CD8-positive, alpha-beta T cell (primary cell): ENCODE measurements at regions of chr4 and their contacts with region 1.

Region 1: GRCh38 chr4:70993181-70994068 is at the start of gene DCK:
- DNase-seq: peak; percentile 65 to 93 (median 82)
- ATAC-seq: peak; percentile 79
- H3K4me3 ChIP-seq: peak within 1 kb of the TSS; percentile 81 to 99
- H3K4me3 Mint-ChIP-seq: peak within 1 kb of the TSS; percentile 95
- H3K27ac ChIP-seq: peak within 1 kb of the TSS; percentile 71 to 88
- H3K27ac Mint-ChIP-seq: peak within 1 kb of the TSS; percentile 94
- H3K4me1 ChIP-seq: peaks cover 29% of the 10 kb centered on the region
- H3K4me1 Mint-ChIP-seq: peaks cover 54% of the 10 kb centered on the region
- H3K27me3 ChIP-seq: no peaks in the 10 kb centered on the region
- H3K27me3 Mint-ChIP-seq: no peaks in the 10 kb centered on the region
- CTCF ChIP-seq: no peak
- total RNA-seq, gene DCK: 18.7 TPM

Region 2: GRCh38 chr4:70559211-70559830 is 434.1 kb before region 1 on chr4:
- CTCF ChIA-PET with region 1: no interaction called
- POLR2A ChIA-PET with region 1: no interaction called
- intact Hi-C with region 1: no loop called
- DNase-seq: peak; percentile 3 to 54 (median 37)
- ATAC-seq: no peak
- H3K4me3 ChIP-seq: no peak overlapping the region
- H3K4me3 Mint-ChIP-seq: no peak overlapping the region
- H3K27ac ChIP-seq: no peak overlapping the region
- H3K27ac Mint-ChIP-seq: no peak overlapping the region
- H3K4me1 ChIP-seq: no peaks in the 10 kb centered on the region
- H3K4me1 Mint-ChIP-seq: peaks cover 10% of the 10 kb centered on the region
- H3K27me3 ChIP-seq: no peaks in the 10 kb centered on the region
- H3K27me3 Mint-ChIP-seq: no peaks in the 10 kb centered on the region
- CTCF ChIP-seq: peak; percentile 66

Region 3: DNA sequence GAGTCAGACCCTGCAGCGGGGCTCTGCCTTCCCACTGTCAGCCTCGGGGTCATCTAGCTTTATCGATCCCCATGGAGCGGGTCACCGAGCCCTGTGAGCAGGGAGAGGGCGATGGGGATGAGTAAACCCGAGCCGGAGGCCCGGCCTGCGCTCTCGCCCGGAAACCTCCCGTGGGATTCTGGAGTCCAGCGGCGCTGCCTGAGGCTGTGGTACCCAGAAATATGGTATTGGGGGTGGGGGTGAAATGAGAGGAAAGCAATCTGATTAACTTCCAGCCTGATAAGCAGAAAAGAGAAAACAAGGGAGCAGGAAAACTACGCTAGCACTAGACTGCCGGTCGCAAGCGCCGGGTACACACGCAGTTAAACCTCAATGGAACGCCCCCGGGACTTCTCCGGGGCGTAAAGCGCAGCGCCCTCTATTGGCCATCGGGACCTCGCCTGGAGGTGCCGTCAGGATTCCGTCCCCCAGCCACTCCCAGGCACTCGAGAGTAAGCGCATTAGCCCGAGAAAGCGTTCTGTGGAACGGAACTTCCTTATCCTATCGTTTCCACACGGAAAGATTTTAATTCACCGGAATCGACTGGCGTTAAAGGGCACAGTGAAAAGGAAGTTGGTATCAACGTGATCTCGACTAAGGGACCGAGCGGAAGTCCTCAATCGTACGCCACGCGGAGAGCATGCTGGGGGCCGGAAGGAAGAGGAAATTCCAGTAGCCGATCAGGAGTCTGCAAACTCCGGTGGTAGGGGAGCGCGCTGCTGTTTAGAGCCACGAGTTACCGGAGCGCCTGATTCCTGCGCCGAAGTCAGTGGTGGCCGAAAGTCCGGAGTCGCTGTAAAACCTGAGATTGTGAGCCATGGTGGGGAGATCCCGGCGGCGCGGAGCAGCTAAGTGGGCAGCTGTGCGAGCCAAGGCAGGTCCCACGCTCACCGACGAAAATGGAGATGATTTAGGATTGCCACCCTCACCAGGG is 305.3 kb before region 1 on chr4 and contains the start of gene UTP3:
- CTCF ChIA-PET with region 1: no interaction called
- POLR2A ChIA-PET with region 1: no interaction called
- intact Hi-C with region 1: loop called (anchors 5 kb)
- DNase-seq: peak; percentile 84 to 98 (median 93)
- ATAC-seq: peak; percentile 89
- H3K4me3 ChIP-seq: peak within 1 kb of the TSS; percentile 78 to 84
- H3K4me3 Mint-ChIP-seq: peak within 1 kb of the TSS; percentile 98
- H3K27ac ChIP-seq: peak within 1 kb of the TSS; percentile 85 to 92
- H3K27ac Mint-ChIP-seq: peak within 1 kb of the TSS; percentile 99
- H3K4me1 ChIP-seq: peaks cover 21% of the 10 kb centered on the region
- H3K4me1 Mint-ChIP-seq: peaks cover 44% of the 10 kb centered on the region
- H3K27me3 ChIP-seq: no peaks in the 10 kb centered on the region
- H3K27me3 Mint-ChIP-seq: no peaks in the 10 kb centered on the region
- CTCF ChIP-seq: peak; percentile 96
- total RNA-seq, gene UTP3: 21.6 to 23.1 TPM

Region 4: DNA sequence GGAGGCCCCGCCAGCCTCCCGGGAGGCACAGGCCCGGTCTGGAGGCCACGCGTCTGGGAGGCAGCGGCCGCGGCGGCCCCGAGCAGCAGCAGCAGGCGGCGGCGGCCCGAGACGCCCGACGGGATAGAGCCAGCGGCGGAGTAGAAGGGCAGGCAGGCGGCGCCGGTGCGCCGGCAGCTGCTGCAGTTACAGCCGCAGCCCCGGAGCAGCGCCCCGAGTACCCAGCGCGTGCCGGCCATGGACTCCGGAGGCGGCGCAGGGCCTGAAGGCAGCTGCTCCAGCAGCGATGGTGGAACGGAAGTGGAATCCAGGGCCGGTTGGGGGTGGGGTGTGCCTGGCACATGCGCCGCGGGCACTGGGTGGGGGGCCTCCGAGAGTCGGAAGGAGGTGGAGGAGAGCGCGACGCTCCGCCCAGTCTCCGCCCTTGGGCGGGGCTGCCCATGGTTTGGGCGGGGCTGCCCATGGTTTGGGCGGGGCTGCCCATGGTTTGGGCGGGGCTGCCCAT is 153.8 kb before region 1 on chr4 and contains the start of gene GRSF1:
- CTCF ChIA-PET with region 1: no interaction called
- POLR2A ChIA-PET with region 1: interaction called, 3 read pairs
- intact Hi-C with region 1: loop called (anchors 1 to 2 kb)
- DNase-seq: peak; percentile 90 to 97 (median 95)
- ATAC-seq: peak; percentile 94
- H3K4me3 ChIP-seq: peak within 1 kb of the TSS; percentile 65 to 80
- H3K4me3 Mint-ChIP-seq: peak within 1 kb of the TSS; percentile 97
- H3K27ac ChIP-seq: peak within 1 kb of the TSS; percentile 80
- H3K27ac Mint-ChIP-seq: peak within 1 kb of the TSS; percentile 97
- H3K4me1 ChIP-seq: peaks cover 29% of the 10 kb centered on the region
- H3K4me1 Mint-ChIP-seq: peaks cover 31% of the 10 kb centered on the region
- H3K27me3 ChIP-seq: no peaks in the 10 kb centered on the region
- H3K27me3 Mint-ChIP-seq: no peaks in the 10 kb centered on the region
- CTCF ChIP-seq: no peak
- total RNA-seq, gene GRSF1: 32.1 to 35.7 TPM

Region 5: DNA sequence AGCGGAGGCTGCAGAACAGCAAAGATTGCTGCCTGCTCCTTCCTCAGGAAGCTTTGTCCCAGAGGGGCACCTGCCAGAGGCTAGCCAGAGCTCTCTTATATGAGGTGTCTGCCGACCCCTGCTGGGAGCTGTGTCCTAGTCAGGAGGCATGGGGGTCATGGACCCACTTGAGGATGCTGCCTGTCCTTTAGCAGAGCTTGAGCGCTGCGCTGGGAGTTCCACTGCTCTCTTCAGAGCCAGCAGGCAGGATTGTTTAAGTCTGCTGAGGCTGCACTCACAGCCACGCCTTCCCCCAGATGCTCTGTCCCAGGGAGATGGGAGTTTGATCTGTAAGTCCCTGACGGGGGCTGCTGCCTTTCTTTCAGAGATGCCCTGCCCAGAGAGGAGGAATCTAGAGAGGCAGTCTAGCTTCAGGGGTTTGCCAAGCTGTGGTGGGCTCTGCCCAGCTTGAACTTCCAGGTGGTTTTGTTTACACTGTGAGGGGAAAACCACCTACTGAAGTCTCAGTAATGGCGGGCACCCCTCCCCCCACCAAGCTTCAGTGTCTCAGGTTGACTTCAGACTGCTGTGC is 10.9 kb after region 1 on chr4:
- CTCF ChIA-PET with region 1: interaction called, 70 read pairs
- POLR2A ChIA-PET with region 1: interaction called, 24 read pairs
- intact Hi-C with region 1: loop called in 1 of 2 experiments (anchors 1 kb)
- DNase-seq: peak; percentile 30 to 90 (median 69)
- ATAC-seq: peak; percentile 86
- H3K4me3 ChIP-seq: peak overlapping the region; percentile 23 to 41
- H3K4me3 Mint-ChIP-seq: peak overlapping the region; percentile 71
- H3K27ac ChIP-seq: peak overlapping the region in 1 of 2 experiments; percentile 65
- H3K27ac Mint-ChIP-seq: peak overlapping the region; percentile 92
- H3K4me1 ChIP-seq: peaks cover 39% of the 10 kb centered on the region
- H3K4me1 Mint-ChIP-seq: peaks cover 88% of the 10 kb centered on the region
- H3K27me3 ChIP-seq: no peaks in the 10 kb centered on the region
- H3K27me3 Mint-ChIP-seq: no peaks in the 10 kb centered on the region
- CTCF ChIP-seq: no peak

Region 6: DNA sequence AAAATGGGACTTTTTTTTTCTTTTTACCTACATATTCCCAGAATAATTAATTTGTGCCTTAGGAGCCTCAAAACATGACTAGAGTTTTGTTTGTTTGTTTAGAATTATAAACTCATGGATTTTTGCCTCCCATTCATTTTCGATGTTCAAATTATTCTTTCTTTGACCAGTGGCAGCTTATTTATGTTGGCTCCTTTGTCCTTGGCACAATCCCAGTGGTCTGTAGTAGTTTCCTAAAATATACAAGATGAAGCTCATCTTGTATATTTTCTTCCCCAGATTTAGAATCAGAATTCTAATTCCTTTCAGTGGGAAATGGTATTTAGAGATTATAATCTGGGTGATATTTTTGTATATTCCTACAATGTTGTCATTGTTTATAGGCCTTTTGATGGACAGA is 27.2 kb after region 1 on chr4:
- CTCF ChIA-PET with region 1: no interaction called
- POLR2A ChIA-PET with region 1: interaction called, 4 read pairs
- intact Hi-C with region 1: loop called (anchors 5 kb)
- DNase-seq: no peak
- ATAC-seq: no peak
- H3K4me3 ChIP-seq: no peak overlapping the region
- H3K4me3 Mint-ChIP-seq: no peak overlapping the region
- H3K27ac ChIP-seq: no peak overlapping the region
- H3K27ac Mint-ChIP-seq: no peak overlapping the region
- H3K4me1 ChIP-seq: no peaks in the 10 kb centered on the region
- H3K4me1 Mint-ChIP-seq: peaks cover 35% of the 10 kb centered on the region
- H3K27me3 ChIP-seq: no peaks in the 10 kb centered on the region
- H3K27me3 Mint-ChIP-seq: no peaks in the 10 kb centered on the region
- CTCF ChIP-seq: no peak

Region 7: GRCh38 chr4:71184195-71184781 is 190.9 kb after region 1 on chr4:
- CTCF ChIA-PET with region 1: interaction called, 4 read pairs
- POLR2A ChIA-PET with region 1: interaction called, 4 read pairs
- intact Hi-C with region 1: loop called in 1 of 2 experiments (anchors 5 kb)
- DNase-seq: peak in 8 of 9 experiments; percentile 3 to 80 (median 40)
- ATAC-seq: peak; percentile 28
- H3K4me3 ChIP-seq: no peak overlapping the region
- H3K4me3 Mint-ChIP-seq: no peak overlapping the region
- H3K27ac ChIP-seq: no peak overlapping the region
- H3K27ac Mint-ChIP-seq: no peak overlapping the region
- H3K4me1 ChIP-seq: peaks cover 15% of the 10 kb centered on the region
- H3K4me1 Mint-ChIP-seq: peaks cover 32% of the 10 kb centered on the region
- H3K27me3 ChIP-seq: no peaks in the 10 kb centered on the region
- H3K27me3 Mint-ChIP-seq: peaks cover 21% of the 10 kb centered on the region
- CTCF ChIP-seq: peak; percentile 76